Caco-2 (cell line): ENCODE measurements at regions of chr10 and their contacts with region 1.

Region 1: DNA sequence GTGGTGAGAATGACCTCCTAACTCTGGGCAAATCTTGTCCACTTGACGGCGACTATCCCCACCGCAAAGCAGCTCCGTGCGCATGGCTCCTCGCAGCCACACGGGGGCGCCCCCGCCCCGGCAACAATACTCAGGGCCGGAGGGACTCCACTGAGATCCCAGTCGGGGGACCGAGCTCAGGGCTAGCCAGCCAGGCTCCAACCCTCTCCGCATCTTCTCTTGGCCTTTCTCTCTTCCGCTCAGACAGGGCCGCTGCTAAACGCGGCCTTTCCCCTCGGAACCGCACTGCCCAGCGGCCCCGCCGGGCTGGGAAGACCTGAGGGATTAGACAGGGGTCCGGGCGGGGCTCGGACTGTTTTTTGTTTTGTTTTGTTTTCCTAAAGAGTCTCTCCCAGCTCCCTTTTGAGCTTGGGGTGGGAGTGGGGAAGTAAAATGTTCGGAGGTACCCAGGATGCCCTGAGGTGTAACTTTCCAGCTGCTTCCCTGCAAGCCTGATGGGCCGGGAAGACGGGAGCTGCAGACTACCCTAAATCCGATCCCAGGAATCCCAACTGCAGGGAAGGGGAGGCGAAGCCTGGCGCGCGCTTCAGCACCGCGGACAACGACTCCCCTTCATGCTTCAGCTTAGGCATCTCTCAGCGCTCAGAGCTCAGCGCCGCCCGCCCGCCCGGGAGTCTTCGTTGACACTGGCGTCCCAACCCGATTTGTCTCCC is 2.7 kb downstream of the KCNIP2 start:
- DNase-seq: peak; percentile 59 to 77
- H3K4me3 ChIP-seq: no peak overlapping the region
- H3K4me3 Mint-ChIP-seq: peak overlapping the region; percentile 71
- H3K27ac Mint-ChIP-seq: no peak overlapping the region
- H3K4me1 ChIP-seq: peaks cover 28% of the 10 kb centered on the region
- H3K4me1 Mint-ChIP-seq: peaks cover 10% of the 10 kb centered on the region
- H3K27me3 ChIP-seq: no peaks in the 10 kb centered on the region
- H3K27me3 Mint-ChIP-seq: no peaks in the 10 kb centered on the region
- CTCF ChIP-seq: peak; percentile 74 to 82

Region 2: GRCh38 chr10:101889256-101890210 is 48.6 kb after region 1 on chr10:
- CTCF ChIA-PET with region 1: interaction called, 5 read pairs
- POLR2A ChIA-PET with region 1: no interaction called
- intact Hi-C with region 1: loop called (anchors 5 kb)
- DNase-seq: peak; percentile 77 to 81
- H3K4me3 ChIP-seq: no peak overlapping the region
- H3K4me3 Mint-ChIP-seq: no peak overlapping the region
- H3K27ac Mint-ChIP-seq: no peak overlapping the region
- H3K4me1 ChIP-seq: no peaks in the 10 kb centered on the region
- H3K4me1 Mint-ChIP-seq: no peaks in the 10 kb centered on the region
- H3K27me3 ChIP-seq: no peaks in the 10 kb centered on the region
- H3K27me3 Mint-ChIP-seq: no peaks in the 10 kb centered on the region
- CTCF ChIP-seq: peak; percentile 84 to 93

Region 3: DNA sequence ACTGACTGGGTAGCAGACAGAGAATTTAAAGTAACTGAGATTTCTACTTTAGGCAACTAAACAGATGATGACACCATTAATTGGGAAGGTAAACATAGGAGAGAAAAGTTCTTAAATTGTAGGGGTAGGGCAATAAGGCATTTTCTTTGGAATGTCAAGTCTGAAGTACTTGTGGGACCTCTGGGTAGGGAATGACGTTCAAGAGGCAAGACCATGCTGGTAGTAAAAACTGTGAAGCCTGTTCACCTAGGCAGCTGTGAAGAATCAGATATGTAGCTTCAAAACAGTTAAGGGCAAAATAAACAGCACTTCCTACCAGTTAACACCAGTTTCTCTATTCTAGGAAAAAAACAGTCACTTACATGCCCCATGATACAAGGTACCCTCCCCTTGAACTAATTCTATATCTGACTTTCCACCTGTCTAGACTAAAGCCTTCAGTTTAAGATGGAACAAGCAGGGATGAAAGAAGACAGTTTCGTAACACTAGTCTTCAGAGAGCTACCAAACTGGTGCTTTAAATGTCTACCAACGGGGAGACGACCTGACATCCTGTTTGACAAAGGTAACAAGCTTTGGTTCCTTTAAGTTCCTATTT is 65.8 kb after region 1 on chr10:
- CTCF ChIA-PET with region 1: no interaction called
- POLR2A ChIA-PET with region 1: no interaction called
- intact Hi-C with region 1: no loop called
- DNase-seq: no peak
- H3K4me3 ChIP-seq: no peak overlapping the region
- H3K4me3 Mint-ChIP-seq: no peak overlapping the region
- H3K27ac Mint-ChIP-seq: no peak overlapping the region
- H3K4me1 ChIP-seq: no peaks in the 10 kb centered on the region
- H3K4me1 Mint-ChIP-seq: no peaks in the 10 kb centered on the region
- H3K27me3 ChIP-seq: no peaks in the 10 kb centered on the region
- H3K27me3 Mint-ChIP-seq: no peaks in the 10 kb centered on the region
- CTCF ChIP-seq: no peak